Aorta (tissue), 5 donors: ENCODE measurements at regions of chr1 and their contacts with region 1.

Region 1: DNA sequence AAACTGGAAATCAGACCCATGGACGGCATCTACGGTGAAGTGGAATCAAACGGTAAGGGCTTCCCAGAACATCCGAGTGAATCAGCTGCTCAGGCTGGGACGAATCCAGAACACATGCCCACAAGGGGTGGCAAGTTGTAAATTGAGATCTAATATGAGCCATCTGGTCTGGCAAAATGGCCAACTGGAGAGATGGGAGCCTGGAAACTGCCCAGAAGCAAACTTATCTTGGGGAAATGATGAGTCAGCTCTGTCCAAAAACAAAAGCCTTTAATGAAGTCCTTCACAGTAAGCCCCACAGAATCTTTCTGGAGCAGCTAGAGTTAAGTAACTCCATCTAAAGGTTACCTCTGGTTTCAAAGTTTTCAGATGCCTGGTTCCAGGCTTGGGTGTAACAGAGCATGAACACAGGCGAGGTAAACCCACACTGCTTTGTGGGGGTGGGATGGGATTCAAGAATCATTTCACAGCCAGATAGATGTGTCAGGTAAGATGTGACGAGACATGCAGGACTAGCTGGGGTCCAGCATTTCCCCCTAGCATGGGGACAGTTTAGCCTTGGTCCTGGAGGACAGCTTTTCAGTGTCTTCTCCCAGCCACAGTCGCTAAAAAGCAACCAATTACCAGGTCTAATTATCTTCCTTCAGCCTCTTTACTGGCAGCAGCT is 10.5 kb upstream of the SRP9 start:
- DNase-seq: peak; percentile 77 to 86
- ATAC-seq: peak; percentile 62
- H3K4me3 ChIP-seq: no peak overlapping the region
- H3K27ac ChIP-seq: peak overlapping the region; percentile 67 to 79
- H3K4me1 ChIP-seq: peaks cover 0 to 6% of the 10 kb centered on the region in 2 donors
- H3K27me3 ChIP-seq: no peaks in the 10 kb centered on the region

Region 2: GRCh38 chr1:225290244-225290643 is 476.9 kb before region 1 on chr1:
- intact Hi-C with region 1: no loop called
- DNase-seq: no peak
- ATAC-seq: no peak
- H3K4me3 ChIP-seq: no peak overlapping the region
- H3K27ac ChIP-seq: no peak overlapping the region
- H3K4me1 ChIP-seq: no peaks in the 10 kb centered on the region
- H3K27me3 ChIP-seq: no peaks in the 10 kb centered on the region

Region 3: GRCh38 chr1:225694151-225694603 is 72.9 kb before region 1 on chr1:
- intact Hi-C with region 1: loop called in 1 of 2 experiments (anchors 10 kb)
- DNase-seq: no peak
- ATAC-seq: peak; percentile 88
- H3K4me3 ChIP-seq: no peak overlapping the region
- H3K27ac ChIP-seq: peak overlapping the region; percentile 49 to 97
- H3K4me1 ChIP-seq: peaks cover 10 to 11% of the 10 kb centered on the region in 2 donors
- H3K27me3 ChIP-seq: no peaks in the 10 kb centered on the region

Region 4: DNA sequence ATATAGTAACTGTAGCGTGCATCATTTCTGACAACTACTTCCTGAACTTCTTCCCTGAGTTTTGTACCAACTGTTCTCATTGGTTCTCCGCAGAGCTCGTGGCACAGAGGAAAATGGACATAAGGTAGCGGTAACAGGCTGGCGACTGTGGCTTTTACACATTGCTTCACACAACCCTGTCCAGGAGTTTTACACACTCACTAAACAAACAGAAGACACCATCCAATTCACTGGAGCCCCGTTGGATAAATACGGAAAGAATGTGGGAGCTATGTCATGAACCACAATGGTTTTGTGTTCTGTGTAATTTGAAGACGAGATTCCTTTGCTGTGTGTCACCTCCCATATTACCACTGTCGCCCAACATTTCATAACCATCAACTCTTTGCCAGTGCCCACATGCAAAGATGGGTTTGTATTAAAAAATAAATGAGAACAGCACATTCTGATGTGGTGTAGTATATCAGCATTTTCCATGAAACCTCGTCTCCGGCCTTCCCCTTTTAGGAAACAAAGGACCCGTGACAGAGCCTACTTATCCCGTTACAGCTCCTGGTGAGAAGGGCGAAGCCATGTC is 66.8 kb before region 1 on chr1:
- intact Hi-C with region 1: loop called (anchors 5 to 10 kb)
- DNase-seq: peak in 1 of 2 donors; percentile 53
- ATAC-seq: peak; percentile 47
- H3K4me3 ChIP-seq: peak overlapping the region in 1 of 2 donors; percentile 18
- H3K27ac ChIP-seq: peak overlapping the region; percentile 91 to 96
- H3K4me1 ChIP-seq: peaks cover 6 to 8% of the 10 kb centered on the region in 2 donors
- H3K27me3 ChIP-seq: no peaks in the 10 kb centered on the region

Region 5: GRCh38 chr1:225746361-225747179 is 20.5 kb before region 1 on chr1:
- intact Hi-C with region 1: no loop called
- DNase-seq: peak; percentile 75 to 80
- ATAC-seq: peak; percentile 92
- H3K4me3 ChIP-seq: peak overlapping the region in 1 of 2 donors; percentile 23
- H3K27ac ChIP-seq: peak overlapping the region; percentile 1 to 80
- H3K4me1 ChIP-seq: peaks cover 0 to 4% of the 10 kb centered on the region in 2 donors
- H3K27me3 ChIP-seq: no peaks in the 10 kb centered on the region

Region 6: DNA sequence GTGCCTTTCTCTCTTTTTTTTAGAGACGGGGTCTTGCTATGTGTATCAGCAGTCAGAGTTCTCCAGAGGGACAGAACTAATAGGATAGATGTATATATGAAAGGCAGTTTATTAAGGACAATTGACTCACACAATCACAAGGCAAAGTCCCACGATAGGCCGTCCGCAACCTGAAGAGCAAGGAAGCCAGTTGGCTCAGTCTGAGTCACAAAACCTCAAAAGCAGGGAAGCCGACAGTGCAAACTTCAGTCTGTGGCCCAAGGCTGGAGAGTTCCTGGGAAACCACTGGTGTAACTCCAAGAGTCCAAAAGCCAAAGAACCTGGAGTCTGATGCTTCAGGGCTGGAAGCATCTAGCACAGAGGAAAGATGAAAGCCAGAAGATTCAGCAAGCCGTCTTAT is 279.1 kb after region 1 on chr1:
- intact Hi-C with region 1: no loop called
- DNase-seq: no peak
- ATAC-seq: no peak
- H3K4me3 ChIP-seq: no peak overlapping the region
- H3K27ac ChIP-seq: no peak overlapping the region
- H3K4me1 ChIP-seq: no peaks in the 10 kb centered on the region
- H3K27me3 ChIP-seq: no peaks in the 10 kb centered on the region

Region 7: GRCh38 chr1:226135059-226135651 is 368.1 kb after region 1 on chr1:
- intact Hi-C with region 1: no loop called
- DNase-seq: peak in 1 of 2 donors; percentile 75
- ATAC-seq: peak; percentile 60
- H3K4me3 ChIP-seq: no peak overlapping the region
- H3K27ac ChIP-seq: no peak overlapping the region
- H3K4me1 ChIP-seq: no peaks in the 10 kb centered on the region
- H3K27me3 ChIP-seq: no peaks in the 10 kb centered on the region